Testis (tissue), 5 donors: ENCODE measurements at regions of chr10 and their contacts with region 1.

Region 1: DNA sequence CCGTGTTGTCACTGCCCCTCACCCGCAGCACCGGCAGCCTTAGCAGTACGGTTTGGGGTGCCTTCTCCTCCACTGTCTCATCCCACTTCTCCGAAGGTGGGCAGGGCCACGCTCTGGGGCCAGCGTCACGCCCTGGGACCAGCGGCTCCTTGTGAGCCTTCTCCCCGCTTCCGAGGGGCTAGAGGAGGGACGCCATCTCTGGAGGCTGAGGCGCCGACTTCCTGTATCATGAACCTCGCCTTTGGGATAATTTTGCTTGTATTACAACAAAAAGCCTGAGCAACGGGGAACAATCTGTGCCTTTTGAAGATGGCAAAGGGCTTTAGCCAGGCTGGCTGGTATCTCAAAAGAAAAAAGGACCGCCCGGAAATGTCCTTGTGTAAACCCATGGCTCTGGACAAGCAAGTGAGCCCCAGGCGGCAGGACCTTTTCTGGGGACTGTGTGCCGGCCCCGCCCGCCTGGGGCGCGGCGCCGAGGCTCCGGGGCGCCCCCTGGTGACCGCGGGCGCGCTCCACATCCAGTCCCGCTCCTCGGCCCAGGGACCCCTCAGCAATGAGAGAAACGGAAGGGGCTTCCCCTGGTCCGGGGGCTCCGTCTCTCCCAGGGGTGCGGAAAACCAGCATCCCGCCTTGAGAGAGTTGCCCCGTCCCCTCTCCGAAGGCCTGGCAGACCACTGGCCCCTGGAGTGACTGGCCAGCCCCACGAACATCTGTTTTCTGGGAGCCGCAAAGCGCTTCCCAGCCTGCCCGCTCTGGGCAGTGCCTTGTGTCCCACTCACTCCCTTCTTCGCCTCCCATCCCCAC is 3.8 kb downstream of the DEPP1 start:
- DNase-seq: peak; percentile 80
- H3K4me3 ChIP-seq: peak overlapping the region; percentile 40 to 48
- H3K27ac ChIP-seq: peak overlapping the region; percentile 61 to 85
- H3K4me1 ChIP-seq: peaks cover 32% of the 10 kb centered on the region
- H3K27me3 ChIP-seq: no peaks in the 10 kb centered on the region
- CTCF ChIP-seq: peak; percentile 86 to 93 (median 90)
- POLR2A ChIP-seq: no peak

Region 2: GRCh38 chr10:44932517-44933450 is 42.0 kb before region 1 on chr10:
- intact Hi-C with region 1: loop called (anchors 5 kb)
- DNase-seq: peak; percentile 95
- H3K4me3 ChIP-seq: no peak overlapping the region
- H3K27ac ChIP-seq: no peak overlapping the region
- H3K4me1 ChIP-seq: peaks cover 10% of the 10 kb centered on the region
- H3K27me3 ChIP-seq: no peaks in the 10 kb centered on the region
- CTCF ChIP-seq: peak; percentile 92 to 95 (median 92)
- POLR2A ChIP-seq: no peak